HepG2 (cell line): ENCODE measurements at regions of chr10 and their contacts with region 1.

Region 1: GRCh38 chr10:35336084-35336831 is at the start of gene CCNY:
- DNase-seq: peak; percentile 42
- ATAC-seq: peak; percentile 87
- H3K4me3 ChIP-seq: peak within 1 kb of the TSS; percentile 95 to 98 (median 98)
- H3K27ac ChIP-seq: peak within 1 kb of the TSS; percentile 78
- H3K4me1 ChIP-seq: peaks cover 69% of the 10 kb centered on the region
- H3K27me3 ChIP-seq: no peaks in the 10 kb centered on the region; a peak in 2 of 5 replicates
- CTCF ChIP-seq: peak; percentile 8; the same call in 1 of the 2 replicates
- EP300 ChIP-seq: no peak
- POLR2A ChIP-seq: peak; percentile 50 to 79
- RAD21 ChIP-seq: 0 out of 2 replicates have a peak, but pooled peaks have one; percentile 8
- total RNA-seq, gene CCNY: 54.7 and 63.6 TPM in 2 replicates

Region 2: DNA sequence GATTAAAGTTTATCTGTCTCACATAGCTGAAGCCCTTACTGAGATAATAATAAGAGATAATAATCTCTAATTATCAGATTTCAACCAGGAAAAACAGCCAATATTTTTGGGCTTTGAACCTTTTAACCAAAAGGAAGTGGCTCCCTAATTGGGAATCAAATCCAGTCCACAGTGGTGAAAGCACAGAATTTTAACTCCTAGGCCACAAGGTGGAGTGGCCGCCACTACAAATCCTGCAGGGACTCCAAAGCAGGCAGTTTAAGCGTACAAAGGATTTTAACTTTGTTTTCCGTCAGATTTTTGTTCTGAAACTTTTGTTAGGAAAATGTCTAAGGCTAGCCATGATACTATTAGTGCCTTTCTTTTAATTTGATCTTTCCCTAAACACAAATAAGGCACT is 99.5 kb before region 1 on chr10:
- CTCF ChIA-PET with region 1: no interaction called
- POLR2A ChIA-PET with region 1: no interaction called
- in situ Hi-C with region 1: no loop called
- intact Hi-C with region 1: loop called (anchors 10 kb)
- DNase-seq: peak; percentile 25
- ATAC-seq: peak; percentile 77
- H3K4me3 ChIP-seq: peak overlapping the region; percentile 45 to 61 (median 49)
- H3K27ac ChIP-seq: no peak overlapping the region
- H3K4me1 ChIP-seq: peaks cover 53% of the 10 kb centered on the region
- H3K27me3 ChIP-seq: no peaks in the 10 kb centered on the region; a peak in 1 of 5 replicates
- CTCF ChIP-seq: peak; percentile 67
- EP300 ChIP-seq: no peak
- POLR2A ChIP-seq: no peak
- RAD21 ChIP-seq: no peak

Region 3: DNA sequence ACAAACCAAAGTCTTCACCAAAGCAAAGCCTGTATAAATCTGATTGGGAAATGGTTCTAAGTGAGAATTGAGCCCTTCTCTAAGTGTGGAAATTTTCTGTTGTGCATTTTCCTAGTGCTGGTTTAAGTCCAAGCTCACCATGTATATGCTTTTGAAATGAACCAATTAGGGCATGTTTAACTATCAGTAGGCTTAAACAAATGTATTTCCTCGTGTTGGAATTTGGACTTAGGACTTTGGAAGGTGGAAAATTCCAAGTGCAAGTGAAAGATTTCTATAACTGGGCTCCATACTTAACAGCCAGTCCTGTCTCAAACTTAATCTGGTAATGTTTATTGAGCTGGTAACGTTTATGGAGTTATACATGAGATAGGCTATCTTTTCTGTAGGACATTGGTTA is 28.6 kb after region 1 on chr10:
- CTCF ChIA-PET with region 1: no interaction called
- POLR2A ChIA-PET with region 1: interaction called, 13 read pairs
- in situ Hi-C with region 1: no loop called
- intact Hi-C with region 1: no loop called
- DNase-seq: peak; percentile 95
- ATAC-seq: peak; percentile 83
- H3K4me3 ChIP-seq: peak overlapping the region in 2 of 3 experiments; percentile 6 to 24; a peak in 1 of 6 replicates
- H3K27ac ChIP-seq: peak overlapping the region; percentile 72
- H3K4me1 ChIP-seq: peaks cover 75% of the 10 kb centered on the region
- H3K27me3 ChIP-seq: no peaks in the 10 kb centered on the region
- CTCF ChIP-seq: no peak
- EP300 ChIP-seq: peak; percentile 41 to 93; a peak in 3 of 4 replicates
- POLR2A ChIP-seq: peak in 1 of 2 experiments; percentile 47; a peak in 1 of 4 replicates
- RAD21 ChIP-seq: no peak

Region 4: GRCh38 chr10:35447693-35448407 is 111.6 kb after region 1 on chr10:
- CTCF ChIA-PET with region 1: no interaction called
- POLR2A ChIA-PET with region 1: no interaction called
- in situ Hi-C with region 1: no loop called
- intact Hi-C with region 1: loop called (anchors 5 kb)
- DNase-seq: peak; percentile 86
- ATAC-seq: peak; percentile 76
- H3K4me3 ChIP-seq: peak overlapping the region; percentile 36 to 60 (median 37)
- H3K27ac ChIP-seq: peak overlapping the region; percentile 74
- H3K4me1 ChIP-seq: peaks cover 80% of the 10 kb centered on the region
- H3K27me3 ChIP-seq: no peaks in the 10 kb centered on the region
- CTCF ChIP-seq: no peak
- EP300 ChIP-seq: peak in 1 of 2 experiments; percentile 58; a peak in 2 of 4 replicates
- POLR2A ChIP-seq: 0 out of 4 replicates have a peak, but pooled peaks of 1 of the 2 experiments have one; percentile 35
- RAD21 ChIP-seq: no peak

Region 5: GRCh38 chr10:35495521-35496119 is 159.4 kb after region 1 on chr10:
- CTCF ChIA-PET with region 1: no interaction called
- POLR2A ChIA-PET with region 1: no interaction called
- in situ Hi-C with region 1: no loop called
- intact Hi-C with region 1: no loop called
- DNase-seq: peak; percentile 63
- ATAC-seq: peak; percentile 94
- H3K4me3 ChIP-seq: no peak overlapping the region
- H3K27ac ChIP-seq: peak overlapping the region; percentile 46
- H3K4me1 ChIP-seq: peaks cover 33% of the 10 kb centered on the region
- H3K27me3 ChIP-seq: no peaks in the 10 kb centered on the region
- CTCF ChIP-seq: no peak
- EP300 ChIP-seq: no peak
- POLR2A ChIP-seq: no peak
- RAD21 ChIP-seq: no peak

Region 6: DNA sequence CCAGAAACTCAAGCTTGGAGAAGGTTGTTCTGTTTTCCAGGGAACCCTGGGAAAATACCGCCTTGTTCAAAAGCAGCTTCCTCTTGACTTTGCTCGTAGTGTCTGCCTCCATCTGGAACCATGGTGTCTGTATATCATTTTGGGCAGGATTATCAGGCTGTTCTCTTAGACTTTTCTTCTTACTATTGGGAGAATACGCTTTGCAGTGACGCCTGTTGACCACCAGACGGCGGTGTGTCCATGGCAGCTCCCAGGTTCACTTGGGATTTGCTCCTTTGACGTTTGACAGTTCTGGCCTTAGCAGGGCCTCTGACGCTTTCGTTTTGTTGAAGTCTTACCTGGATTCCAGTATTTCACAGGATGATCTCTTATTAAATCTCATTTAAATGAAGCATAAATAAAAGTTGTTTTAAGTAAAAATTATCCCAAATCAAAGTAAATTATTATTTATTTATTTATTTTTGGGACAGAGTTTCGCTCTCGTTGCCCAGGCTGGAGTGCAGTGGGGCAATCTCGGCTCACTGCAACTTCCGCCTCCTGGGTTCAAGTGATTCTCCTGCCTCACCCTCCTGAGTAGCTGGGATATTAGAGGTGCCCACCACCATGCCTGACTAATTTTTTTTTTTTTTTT is 227.1 kb after region 1 on chr10:
- CTCF ChIA-PET with region 1: no interaction called
- POLR2A ChIA-PET with region 1: no interaction called
- in situ Hi-C with region 1: no loop called
- intact Hi-C with region 1: loop called (anchors 2 kb)
- DNase-seq: peak; percentile 64
- ATAC-seq: peak; percentile 71
- H3K4me3 ChIP-seq: no peak overlapping the region
- H3K27ac ChIP-seq: no peak overlapping the region
- H3K4me1 ChIP-seq: no peaks in the 10 kb centered on the region
- H3K27me3 ChIP-seq: no peaks in the 10 kb centered on the region
- CTCF ChIP-seq: peak; percentile 89
- EP300 ChIP-seq: no peak
- POLR2A ChIP-seq: no peak
- RAD21 ChIP-seq: 0 out of 2 replicates have a peak, but pooled peaks have one; percentile 36